ENCODE measurements at regions of chr12 and their contacts with region 1.

Region 1: DNA sequence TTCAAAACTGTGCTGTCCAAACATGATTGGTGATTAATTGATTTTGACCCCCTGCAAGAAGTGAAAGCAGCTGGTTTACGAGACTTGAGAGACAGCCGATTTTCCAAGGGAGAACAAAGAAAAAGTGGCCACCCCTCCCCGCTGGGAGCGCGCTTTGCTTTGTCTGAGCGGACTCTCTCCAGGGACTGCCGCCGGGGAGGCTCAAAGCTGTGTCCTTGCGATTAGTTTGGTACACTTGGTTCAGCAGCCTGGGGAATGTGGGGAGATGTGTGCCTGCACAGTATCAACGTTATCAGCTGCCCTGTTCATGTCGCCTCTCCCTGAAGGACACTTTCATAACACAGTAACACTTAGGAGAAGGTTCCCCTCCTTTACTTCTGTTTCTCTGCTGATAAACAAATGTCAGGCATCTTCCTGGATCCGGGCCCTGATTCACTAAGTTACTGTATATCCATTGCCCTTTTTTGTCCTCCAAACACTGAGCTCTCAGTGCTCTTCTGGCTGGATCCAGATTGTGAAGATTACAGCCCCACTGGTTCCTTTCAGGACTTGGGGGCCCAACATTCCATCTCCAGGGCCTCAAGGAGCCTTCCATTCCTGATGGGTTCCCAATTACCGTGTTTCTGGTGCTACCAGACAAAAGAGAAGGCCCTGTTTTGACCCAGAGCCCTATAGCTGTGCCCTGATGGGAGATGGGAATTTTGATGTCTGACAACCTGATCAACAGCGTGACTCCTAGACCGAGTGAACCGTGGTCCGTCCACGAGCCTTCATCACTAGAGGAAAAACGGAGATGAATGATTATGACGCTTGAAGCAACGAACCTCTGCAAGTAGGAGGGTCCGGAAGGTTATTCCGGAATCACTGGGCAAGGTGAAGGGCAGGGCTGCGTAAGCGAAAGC is 31.7 kb upstream of the TUBA1C start:
- DNase-seq: peak; percentile 81
- ATAC-seq: peak; percentile 77

Region 2: GRCh38 chr12:49060237-49061156 is 172.7 kb before region 1 on chr12 and contains the start of gene KMT2D:
- intact Hi-C with region 1: loop called (anchors 2 kb)
- DNase-seq: peak; percentile 96
- ATAC-seq: peak; percentile 86
- total RNA-seq, gene KMT2D: 33.5 TPM

Region 3: GRCh38 chr12:49088190-49088931 is 144.8 kb before region 1 on chr12:
- intact Hi-C with region 1: loop called (anchors 1 kb)
- DNase-seq: peak; percentile 78
- ATAC-seq: peak; percentile 95

Region 4: DNA sequence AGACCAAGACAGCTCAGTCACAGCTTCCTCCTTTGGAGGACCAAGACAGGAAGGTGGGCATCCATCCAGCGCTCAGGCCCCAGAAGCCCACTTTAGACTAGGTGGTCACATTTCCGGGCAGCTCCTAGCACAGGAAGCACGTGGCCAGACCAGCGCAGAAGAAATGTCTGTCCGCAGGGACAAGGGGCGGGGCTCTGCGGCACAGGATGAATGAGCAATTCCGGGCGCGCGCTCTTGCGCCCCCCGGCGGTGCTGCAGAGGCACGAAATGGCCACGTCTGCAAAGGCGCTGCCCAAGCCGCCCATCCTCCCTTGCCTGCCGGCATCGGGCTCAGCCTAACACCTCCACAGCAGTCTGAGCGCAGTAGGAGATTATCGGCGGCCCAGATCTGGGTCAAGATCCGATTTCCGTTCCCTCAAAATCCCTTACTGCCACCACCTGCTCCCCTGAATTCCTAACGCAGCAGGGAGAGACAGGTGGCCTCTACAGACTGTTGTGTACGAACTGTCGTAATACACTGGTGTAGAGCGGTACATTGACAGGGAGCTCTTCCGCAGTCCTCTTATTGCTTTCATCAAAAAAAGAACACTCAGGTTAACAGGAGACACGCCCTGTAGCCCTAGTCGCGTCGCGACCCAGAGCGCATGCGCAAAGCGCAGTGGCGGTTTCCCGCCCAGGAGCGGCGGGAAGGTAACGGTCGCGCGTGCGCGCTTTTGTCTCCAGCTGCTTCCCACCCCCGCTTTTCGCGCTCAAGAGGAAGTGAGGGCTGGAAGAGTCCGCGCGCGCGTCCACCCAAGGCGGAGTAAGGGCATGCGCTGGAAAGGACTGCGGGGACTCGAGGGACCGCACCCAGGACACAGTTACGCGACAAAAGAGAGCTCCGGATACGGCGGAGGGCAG is 102.8 kb before region 1 on chr12:
- intact Hi-C with region 1: loop called (anchors 1 kb)
- DNase-seq: peak; percentile 98
- ATAC-seq: peak; percentile 86

Region 5: DNA sequence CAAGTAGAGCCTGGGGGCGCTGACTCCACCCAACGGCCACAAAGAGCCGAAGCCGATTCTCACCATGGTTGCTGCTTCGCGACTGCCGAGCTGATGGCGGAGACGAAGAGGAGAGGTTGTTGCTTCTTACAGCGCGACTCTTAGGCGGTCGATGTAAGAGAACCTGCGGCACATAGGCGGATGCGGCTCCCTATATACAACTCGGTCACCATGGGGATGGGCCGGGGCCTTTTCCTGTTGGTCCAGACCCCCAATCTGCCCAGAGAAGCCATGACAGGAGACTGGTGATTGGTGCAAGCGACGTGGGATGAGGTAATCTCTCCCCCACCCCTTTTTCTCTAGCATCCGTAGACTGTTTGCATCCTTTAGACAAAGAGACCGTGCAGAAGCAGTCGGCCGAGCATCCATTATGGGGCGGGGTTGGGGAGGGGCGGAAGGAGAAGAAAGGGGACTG is 44.2 kb before region 1 on chr12 and contains the start of gene TUBA1A:
- intact Hi-C with region 1: loop called (anchors 1 kb)
- DNase-seq: peak; percentile 96
- ATAC-seq: peak; percentile 93
- total RNA-seq, gene TUBA1A: 135 TPM

Region 6: DNA sequence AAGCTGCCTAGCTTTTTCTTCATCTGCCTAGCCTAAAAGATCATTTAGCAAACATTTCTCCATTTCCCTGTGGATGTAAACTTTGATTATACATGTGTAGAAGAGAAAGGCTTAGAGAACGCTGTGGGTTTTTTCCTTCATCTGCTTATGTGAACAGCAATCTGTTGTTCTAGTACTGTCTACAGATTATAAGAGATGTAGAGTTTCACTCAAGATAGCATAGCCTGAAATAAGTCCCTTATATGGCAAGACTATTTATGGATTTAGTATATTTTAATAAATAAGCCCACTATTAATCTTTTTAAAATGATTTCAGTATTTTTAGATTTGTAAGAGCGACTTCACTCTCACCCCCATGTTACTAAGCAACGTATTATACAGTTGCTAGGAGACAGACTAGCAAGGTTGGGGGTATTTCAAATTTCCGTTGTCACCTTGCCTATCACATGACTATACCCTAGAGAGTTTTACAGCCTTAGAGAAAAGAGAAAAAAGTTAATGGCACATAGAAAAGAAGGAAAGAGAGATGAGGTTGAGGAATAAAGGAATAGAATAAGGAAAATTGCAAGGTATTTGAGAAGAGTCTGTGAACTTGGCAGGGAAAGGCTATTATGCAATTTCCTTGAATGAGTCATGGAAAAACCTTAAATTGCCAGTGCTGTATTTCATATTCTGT is 32.1 kb before region 1 on chr12:
- intact Hi-C with region 1: loop called (anchors 1 kb)
- DNase-seq: no peak
- ATAC-seq: peak; percentile 78

Region 7: DNA sequence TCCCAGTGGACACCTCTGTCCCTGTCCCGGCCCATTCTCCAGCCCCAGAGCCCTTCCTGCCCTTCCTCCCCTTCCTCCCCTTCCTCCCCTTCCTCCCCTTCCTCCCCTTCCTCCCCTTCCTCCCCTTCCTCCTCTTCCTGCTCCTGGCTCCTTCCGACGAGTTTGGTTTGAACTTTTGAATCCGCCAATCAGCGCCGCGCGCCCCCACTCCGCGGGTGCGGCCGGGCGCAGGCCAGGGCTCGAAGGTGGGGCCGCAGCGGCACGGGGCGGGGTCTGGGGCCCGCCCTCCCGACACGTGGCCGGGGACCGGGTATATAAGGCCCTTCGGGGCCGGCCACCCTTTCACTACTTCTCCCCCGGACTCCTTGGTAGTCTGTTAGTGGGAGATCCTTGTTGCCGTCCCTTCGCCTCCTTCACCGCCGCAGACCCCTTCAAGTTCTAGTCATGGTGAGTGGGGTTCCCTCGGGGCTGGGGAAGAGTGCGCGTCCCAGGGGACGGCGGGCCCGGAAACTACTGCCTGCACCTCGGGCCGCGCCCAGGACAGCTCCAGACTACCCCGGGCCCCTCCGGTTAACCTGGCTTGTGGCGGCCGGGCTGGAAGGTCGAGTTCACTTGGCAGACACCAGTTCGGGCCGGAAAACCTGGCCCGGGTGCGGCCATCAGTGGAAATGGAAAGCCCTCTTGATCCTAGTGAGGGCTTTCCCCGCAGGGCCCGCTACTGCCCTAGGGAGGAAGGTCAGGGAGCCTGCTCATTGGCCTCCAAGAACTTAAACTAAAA is 31.7 kb after region 1 on chr12 and contains the start of gene TUBA1C:
- intact Hi-C with region 1: no loop called
- DNase-seq: peak; percentile 96
- ATAC-seq: peak; percentile 98
- total RNA-seq, gene TUBA1C: 86.2 TPM